HepG2 (cell line): ENCODE measurements at regions of chr4 and their contacts with region 1.

Region 1: DNA sequence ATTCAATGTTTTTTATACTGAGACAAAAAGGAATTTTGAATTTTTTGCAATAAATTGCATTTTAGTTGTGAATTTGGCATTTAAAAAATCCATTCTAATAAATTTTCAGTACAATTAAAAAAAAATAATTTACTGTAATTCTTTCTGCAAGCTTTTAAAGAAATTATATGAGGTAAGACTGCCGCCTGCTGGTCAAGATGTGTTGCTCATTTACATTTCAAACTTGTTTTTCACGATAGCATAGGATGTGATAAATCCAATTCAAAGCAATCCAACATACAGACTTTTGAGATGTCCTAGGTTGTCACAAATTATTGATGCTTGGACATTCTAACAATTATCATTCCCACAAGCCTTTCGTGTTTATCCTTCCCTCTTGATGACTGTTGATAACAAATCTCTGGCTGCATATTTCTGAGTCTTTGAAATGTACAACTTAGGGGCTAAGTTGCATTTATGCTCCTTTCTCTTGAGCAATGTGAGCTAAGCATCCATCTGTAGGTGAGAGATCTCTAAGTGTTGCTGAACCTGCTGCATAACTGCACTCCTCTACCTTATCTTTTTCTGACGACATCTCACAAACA is 21.7 kb upstream of the MFAP3L start:
- DNase-seq: peak; percentile 53
- ATAC-seq: no peak
- H3K4me3 ChIP-seq: no peak overlapping the region
- H3K27ac ChIP-seq: no peak overlapping the region
- H3K4me1 ChIP-seq: no peaks in the 10 kb centered on the region
- H3K27me3 ChIP-seq: no peaks in the 10 kb centered on the region
- CTCF ChIP-seq: peak; percentile 65
- EP300 ChIP-seq: no peak
- POLR2A ChIP-seq: no peak
- RAD21 ChIP-seq: peak; percentile 44; the same call in 1 of the 2 replicates

Region 2: GRCh38 chr4:169791527-169792156 is 256.2 kb before region 1 on chr4:
- CTCF ChIA-PET with region 1: interaction called, 4 read pairs
- POLR2A ChIA-PET with region 1: no interaction called
- in situ Hi-C with region 1: no loop called
- intact Hi-C with region 1: loop called (anchors 5 kb)
- DNase-seq: peak; percentile 54
- ATAC-seq: peak; percentile 98
- H3K4me3 ChIP-seq: peak overlapping the region in 2 of 3 experiments; percentile 15 to 37; a peak in 4 of 6 replicates
- H3K27ac ChIP-seq: no peak overlapping the region
- H3K4me1 ChIP-seq: peaks cover 13% of the 10 kb centered on the region
- H3K27me3 ChIP-seq: peaks cover 0 to 8% of the 10 kb centered on the region in 2 experiments; a peak in 3 of 5 replicates
- CTCF ChIP-seq: peak; percentile 59
- EP300 ChIP-seq: no peak
- POLR2A ChIP-seq: no peak
- RAD21 ChIP-seq: no peak

Region 3: DNA sequence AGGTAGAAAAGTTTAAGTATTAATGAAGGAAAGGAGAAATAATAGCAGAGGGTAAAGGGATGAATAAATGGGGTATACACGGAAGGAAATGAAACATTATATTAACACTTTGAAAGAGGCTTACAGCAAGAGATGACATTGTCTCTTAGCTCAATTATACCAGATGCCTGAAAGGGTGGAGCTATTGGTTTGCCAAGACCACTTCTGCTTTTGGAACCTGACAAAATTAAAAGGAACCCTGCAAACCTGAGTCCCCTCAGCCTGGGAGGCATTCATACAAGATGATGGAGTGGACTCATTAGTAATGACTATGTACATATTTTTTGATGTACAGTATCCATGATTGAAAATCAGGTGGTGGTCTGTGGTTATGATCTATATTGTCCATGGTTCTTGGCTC is 245.0 kb before region 1 on chr4:
- CTCF ChIA-PET with region 1: no interaction called
- POLR2A ChIA-PET with region 1: no interaction called
- in situ Hi-C with region 1: loop called (anchors 10 kb)
- intact Hi-C with region 1: no loop called
- DNase-seq: no peak
- ATAC-seq: no peak
- H3K4me3 ChIP-seq: no peak overlapping the region
- H3K27ac ChIP-seq: no peak overlapping the region
- H3K4me1 ChIP-seq: no peaks in the 10 kb centered on the region
- H3K27me3 ChIP-seq: no peaks in the 10 kb centered on the region; a peak in 1 of 5 replicates
- CTCF ChIP-seq: no peak
- EP300 ChIP-seq: no peak
- POLR2A ChIP-seq: no peak
- RAD21 ChIP-seq: no peak

Region 4: DNA sequence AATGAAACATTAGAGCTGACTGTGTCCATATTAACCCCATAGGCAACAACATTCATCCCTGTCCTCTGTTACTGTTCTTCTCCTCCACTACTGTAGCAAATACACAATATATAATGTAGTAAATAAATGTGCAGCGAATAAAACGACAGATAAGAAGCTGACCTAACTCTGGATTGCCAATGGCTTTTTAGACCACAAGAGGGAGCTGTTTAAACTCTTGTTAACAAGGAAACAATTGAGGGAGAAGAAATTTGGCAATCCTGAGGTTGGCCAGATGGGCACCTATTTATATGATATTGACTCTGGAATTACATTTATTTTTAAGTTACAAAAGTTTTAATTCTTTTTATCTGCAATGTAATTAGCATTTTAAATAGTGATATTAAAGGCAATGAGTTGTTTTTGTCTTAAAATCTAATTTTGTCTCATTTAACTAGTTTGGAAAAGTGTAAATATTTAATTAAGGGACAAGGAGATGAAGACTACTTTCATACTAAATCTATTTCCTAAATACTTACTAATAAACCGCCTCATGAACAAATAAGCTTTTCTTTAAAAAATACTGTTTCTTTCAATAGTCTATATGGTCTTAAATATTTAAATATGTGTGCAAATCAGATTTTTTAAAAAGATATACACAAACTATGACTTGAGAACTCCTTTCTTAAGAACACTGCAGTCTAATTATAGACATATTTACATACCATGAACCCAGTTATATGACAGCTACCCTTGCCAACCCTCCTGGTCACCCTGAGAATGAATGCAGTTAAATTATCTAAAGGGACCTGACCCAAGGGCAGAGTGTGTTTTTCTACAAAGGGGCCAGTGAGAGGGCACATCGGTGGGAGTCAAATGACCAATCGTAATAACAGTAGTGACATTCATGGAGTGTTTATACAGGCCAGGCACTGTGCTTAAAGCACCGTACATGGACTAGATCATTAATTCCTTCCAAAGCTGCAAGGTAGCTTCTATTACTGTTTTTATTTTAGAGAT is 237.2 kb before region 1 on chr4:
- CTCF ChIA-PET with region 1: interaction called, 41 read pairs
- POLR2A ChIA-PET with region 1: no interaction called
- in situ Hi-C with region 1: loop called (anchors 10 kb)
- intact Hi-C with region 1: loop called (anchors 1 kb)
- DNase-seq: peak; percentile 69
- ATAC-seq: peak; percentile 74
- H3K4me3 ChIP-seq: no peak overlapping the region
- H3K27ac ChIP-seq: no peak overlapping the region
- H3K4me1 ChIP-seq: no peaks in the 10 kb centered on the region
- H3K27me3 ChIP-seq: no peaks in the 10 kb centered on the region
- CTCF ChIP-seq: peak; percentile 73
- EP300 ChIP-seq: no peak
- POLR2A ChIP-seq: no peak
- RAD21 ChIP-seq: peak; percentile 53